ENCODE measurements at regions of chr16 and their contacts with region 1.

Region 1: DNA sequence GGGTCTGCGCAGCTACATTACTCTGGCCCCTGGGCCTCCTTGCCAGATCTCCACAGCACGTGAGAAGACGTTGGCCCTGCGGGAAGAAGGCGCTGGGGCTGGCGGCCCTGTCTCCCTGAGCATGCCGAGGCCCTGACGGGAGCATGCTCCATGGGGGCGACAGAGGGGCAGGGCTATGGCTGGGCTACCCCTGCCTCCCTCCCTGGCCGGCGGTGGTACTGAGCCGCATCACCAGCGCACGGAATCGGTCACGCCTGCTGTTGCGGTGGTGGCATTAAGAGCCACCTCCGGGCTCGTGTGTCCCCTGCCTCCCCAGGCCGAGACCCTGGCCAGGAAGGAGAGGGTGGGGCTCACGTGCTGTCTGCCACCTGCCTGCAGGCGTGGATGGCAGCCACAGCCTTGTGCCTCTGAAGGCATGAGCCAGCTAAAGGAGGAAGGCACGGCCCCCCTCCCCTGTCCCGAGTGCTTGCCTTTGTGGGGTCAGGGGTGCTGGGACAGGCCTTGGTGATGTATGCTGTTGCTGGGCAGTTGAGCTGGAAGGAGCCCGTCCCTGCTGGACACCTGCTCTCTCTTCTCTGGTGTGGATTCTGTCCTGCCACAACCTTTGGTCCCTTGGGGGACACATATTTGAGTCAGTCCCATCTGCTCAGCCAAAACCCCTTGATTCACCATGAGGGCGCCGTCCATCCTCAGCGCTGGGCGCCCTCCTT is 28.3 kb downstream of the MAPK8IP3 start:
- DNase-seq: no peak
- ATAC-seq: peak in 5 of 8 donors; percentile 16 to 56 (median 28)
- H3K4me3 ChIP-seq: no peak overlapping the region
- H3K27ac ChIP-seq: no peak overlapping the region
- H3K4me1 ChIP-seq: peaks cover 0 to 10% (median 0%) of the 10 kb centered on the region in 9 donors
- H3K27me3 ChIP-seq: no peaks in the 10 kb centered on the region
- CTCF ChIP-seq: no peak

Region 2: DNA sequence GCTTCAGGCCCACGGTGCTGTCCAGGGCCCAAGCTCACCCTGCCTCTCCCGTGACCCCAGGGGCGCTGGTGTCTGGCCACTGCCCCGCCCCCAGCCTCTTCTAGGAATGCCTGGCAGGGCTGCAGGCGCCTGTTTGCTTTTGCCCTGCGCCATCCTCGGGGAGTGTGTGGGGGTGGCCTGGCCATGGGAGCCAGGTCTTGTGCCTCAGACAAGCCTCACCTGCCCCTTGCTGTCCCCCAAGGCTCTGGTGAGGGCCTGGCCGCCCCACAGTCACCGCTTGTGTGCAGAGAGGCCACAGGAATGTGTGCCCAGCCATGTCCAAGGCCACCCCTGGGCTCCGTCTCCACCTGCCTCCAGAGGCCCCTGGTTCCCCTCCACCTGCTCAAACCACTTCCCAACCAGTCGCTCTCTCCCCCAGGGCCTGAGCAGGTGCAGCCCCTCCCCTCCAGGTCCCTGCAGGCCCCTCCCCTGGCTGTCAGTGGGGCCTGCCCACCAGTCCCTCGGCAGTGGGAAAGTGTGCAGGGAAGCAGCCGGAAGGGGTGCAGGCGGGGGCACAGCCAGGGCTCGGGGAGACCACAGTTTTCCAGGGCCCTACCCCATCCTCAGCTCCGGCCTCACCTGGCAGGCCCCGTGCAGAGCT is 60.1 kb after region 1 on chr16:
- intact Hi-C with region 1: loop called in 1 of 10 experiments (anchors 10 kb)
- DNase-seq: peak in 1 of 2 donors; percentile 3
- ATAC-seq: peak in 2 of 8 donors; percentile 7 to 10
- H3K4me3 ChIP-seq: no peak overlapping the region
- H3K27ac ChIP-seq: no peak overlapping the region
- H3K4me1 ChIP-seq: no peaks in the 10 kb centered on the region
- H3K27me3 ChIP-seq: no peaks in the 10 kb centered on the region
- CTCF ChIP-seq: no peak